Left cardiac atrium (tissue), 4 donors: ENCODE measurements at regions of chr1 and their contacts with region 1.

Region 1: GRCh38 chr1:92298573-92299476 is at the starts of genes GLMN and RPAP2:
- DNase-seq: peak; percentile 87
- ATAC-seq: peak; percentile 99 to 100
- total RNA-seq, gene GLMN: 6.4 to 8.1 TPM
- total RNA-seq, gene RPAP2: 23.6 to 25.8 TPM

Region 2: GRCh38 chr1:91500756-91501522 is 797.9 kb before region 1 on chr1 and contains the start of gene CDC7:
- intact Hi-C with region 1: loop called in 1 of 2 experiments (anchors 10 kb)
- DNase-seq: peak; percentile 95
- ATAC-seq: peak; percentile 97
- total RNA-seq, gene CDC7: 1.3 to 3.2 TPM